Heart right ventricle (tissue), 16 donors: ENCODE measurements at regions of chr4 and their contacts with region 1.

Region 1: DNA sequence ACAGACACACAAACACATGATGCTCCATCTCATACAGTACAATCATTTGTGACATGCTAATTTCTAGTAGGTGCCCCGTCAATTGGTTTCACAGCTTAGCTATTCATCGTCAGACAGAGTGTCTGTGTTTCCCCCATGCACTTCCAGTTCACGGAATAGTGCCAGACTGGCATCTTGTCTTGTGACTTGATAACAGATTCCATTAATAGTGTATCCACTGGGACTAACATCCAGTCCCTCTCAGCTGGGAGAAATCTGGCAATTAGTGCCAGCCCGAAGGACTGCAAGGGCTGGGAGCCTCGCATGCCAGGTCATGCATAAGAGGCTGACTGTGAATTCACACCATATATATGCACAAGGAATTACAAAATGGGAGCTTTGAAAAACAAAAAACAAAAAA is 20.2 kb upstream of the GATB start:
- DNase-seq: peak; percentile 20 to 69
- ATAC-seq: peak; percentile 80 to 96 (median 92)
- H3K4me3 ChIP-seq: no peak overlapping the region
- H3K27ac ChIP-seq: peak overlapping the region in 9 of 10 donors; percentile 41 to 79 (median 56)
- H3K4me1 ChIP-seq: peaks cover 0 to 37% (median 9%) of the 10 kb centered on the region in 9 donors
- H3K27me3 ChIP-seq: no peaks in the 10 kb centered on the region
- CTCF ChIP-seq: no peak

Region 2: DNA sequence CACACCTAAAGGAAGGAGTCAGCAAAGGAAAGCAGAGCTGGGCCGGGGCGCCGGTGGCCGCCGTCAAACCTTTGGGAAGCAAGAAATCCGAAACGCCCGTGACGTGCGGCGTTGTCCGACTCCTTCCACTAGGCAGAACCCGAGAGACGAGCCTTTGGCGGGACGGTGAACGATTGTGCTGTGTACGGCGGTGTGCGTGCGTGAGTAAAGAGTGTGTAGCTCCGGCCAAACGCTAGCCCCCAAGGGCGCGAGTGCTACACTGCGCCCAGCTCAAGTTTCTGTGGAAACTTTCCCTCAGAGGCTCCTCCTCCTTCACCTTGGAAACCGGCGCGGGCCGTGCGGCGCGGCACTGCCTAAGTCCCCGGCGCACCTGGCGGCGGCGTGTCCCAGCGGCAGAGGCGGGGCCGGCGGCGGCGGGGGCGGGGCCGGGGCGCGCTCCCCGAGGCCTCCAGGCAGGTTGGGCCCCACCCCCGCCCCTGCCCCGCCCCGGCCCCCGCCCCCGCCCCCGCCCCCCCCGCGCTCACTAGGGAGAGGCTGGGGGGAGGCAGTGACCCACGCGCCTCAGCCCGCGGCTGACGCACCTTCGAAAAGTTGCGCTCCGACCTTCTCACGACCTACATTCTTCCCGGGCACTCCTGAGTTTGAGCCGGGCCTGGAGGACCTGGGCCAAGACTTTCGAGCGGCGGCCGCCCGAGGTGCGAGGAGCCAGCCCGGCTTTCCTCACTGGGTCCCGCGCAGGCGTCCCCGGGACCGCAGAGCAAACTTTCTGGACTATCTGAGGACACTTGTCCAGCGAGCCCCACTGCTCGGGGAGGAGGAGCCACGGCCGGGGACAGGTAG is 372.2 kb before region 1 on chr4 and contains the start of gene FHIP1A:
- intact Hi-C with region 1: no loop called
- DNase-seq: peak; percentile 41 to 73
- ATAC-seq: peak; percentile 74 to 87 (median 83)
- H3K4me3 ChIP-seq: peak within 1 kb of the TSS; percentile 41 to 67 (median 62)
- H3K27ac ChIP-seq: peak within 1 kb of the TSS in 9 of 10 donors; percentile 51 to 77 (median 56)
- H3K4me1 ChIP-seq: peaks cover 0 to 27% (median 20%) of the 10 kb centered on the region in 9 donors
- H3K27me3 ChIP-seq: peaks cover 0 to 38% (median 0%) of the 10 kb centered on the region in 7 donors
- CTCF ChIP-seq: peak in 2 of 9 donors; percentile 17
- total RNA-seq, gene FHIP1A: 12.6 to 27.7 (median 21.7) TPM

Region 3: GRCh38 chr4:151718984-151719955 is 61.8 kb before region 1 on chr4:
- intact Hi-C with region 1: no loop called
- DNase-seq: peak in 1 of 2 donors; percentile 30
- ATAC-seq: peak; percentile 40 to 97 (median 73)
- H3K4me3 ChIP-seq: no peak overlapping the region
- H3K27ac ChIP-seq: peak overlapping the region; percentile 12 to 77 (median 68)
- H3K4me1 ChIP-seq: peaks cover 0 to 17% (median 4%) of the 10 kb centered on the region in 9 donors
- H3K27me3 ChIP-seq: no peaks in the 10 kb centered on the region
- CTCF ChIP-seq: no peak

Region 4: GRCh38 chr4:151744614-151745013 is 36.4 kb before region 1 on chr4:
- intact Hi-C with region 1: loop called in 1 of 10 experiments (anchors 2 kb)
- DNase-seq: no peak
- ATAC-seq: peak in 6 of 8 donors; percentile 11 to 74 (median 46)
- H3K4me3 ChIP-seq: no peak overlapping the region
- H3K27ac ChIP-seq: peak overlapping the region in 4 of 10 donors; percentile 3 to 62 (median 58)
- H3K4me1 ChIP-seq: peaks cover 0 to 30% (median 13%) of the 10 kb centered on the region in 9 donors
- H3K27me3 ChIP-seq: no peaks in the 10 kb centered on the region
- CTCF ChIP-seq: no peak

Region 5: DNA sequence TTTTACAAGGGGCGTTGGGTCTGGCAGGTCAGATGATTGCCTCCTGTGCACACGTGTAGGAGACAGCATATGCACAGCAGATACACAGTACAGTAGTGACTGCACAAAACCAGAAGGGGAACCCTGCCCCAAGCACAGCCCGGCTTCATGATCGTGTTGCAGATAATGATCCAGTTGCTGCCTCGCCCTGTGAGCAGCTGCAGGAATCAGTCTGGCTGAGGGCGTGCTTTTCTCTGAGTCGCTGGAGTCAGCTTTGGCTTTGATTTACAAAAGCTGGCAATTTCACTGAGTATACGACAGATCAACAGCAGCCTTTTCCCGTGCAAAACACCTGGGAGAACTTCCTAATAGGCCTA is 282.8 kb after region 1 on chr4:
- intact Hi-C with region 1: no loop called
- DNase-seq: no peak
- ATAC-seq: peak in 2 of 8 donors; percentile 35 to 42
- H3K4me3 ChIP-seq: no peak overlapping the region
- H3K27ac ChIP-seq: peak overlapping the region in 1 of 10 donors; percentile 12
- H3K4me1 ChIP-seq: peaks cover 0 to 16% (median 0%) of the 10 kb centered on the region in 9 donors
- H3K27me3 ChIP-seq: no peaks in the 10 kb centered on the region
- CTCF ChIP-seq: peak in 1 of 9 donors; percentile 10